ENCODE measurements at regions of chr19 and their contacts with region 1.

Region 1: DNA sequence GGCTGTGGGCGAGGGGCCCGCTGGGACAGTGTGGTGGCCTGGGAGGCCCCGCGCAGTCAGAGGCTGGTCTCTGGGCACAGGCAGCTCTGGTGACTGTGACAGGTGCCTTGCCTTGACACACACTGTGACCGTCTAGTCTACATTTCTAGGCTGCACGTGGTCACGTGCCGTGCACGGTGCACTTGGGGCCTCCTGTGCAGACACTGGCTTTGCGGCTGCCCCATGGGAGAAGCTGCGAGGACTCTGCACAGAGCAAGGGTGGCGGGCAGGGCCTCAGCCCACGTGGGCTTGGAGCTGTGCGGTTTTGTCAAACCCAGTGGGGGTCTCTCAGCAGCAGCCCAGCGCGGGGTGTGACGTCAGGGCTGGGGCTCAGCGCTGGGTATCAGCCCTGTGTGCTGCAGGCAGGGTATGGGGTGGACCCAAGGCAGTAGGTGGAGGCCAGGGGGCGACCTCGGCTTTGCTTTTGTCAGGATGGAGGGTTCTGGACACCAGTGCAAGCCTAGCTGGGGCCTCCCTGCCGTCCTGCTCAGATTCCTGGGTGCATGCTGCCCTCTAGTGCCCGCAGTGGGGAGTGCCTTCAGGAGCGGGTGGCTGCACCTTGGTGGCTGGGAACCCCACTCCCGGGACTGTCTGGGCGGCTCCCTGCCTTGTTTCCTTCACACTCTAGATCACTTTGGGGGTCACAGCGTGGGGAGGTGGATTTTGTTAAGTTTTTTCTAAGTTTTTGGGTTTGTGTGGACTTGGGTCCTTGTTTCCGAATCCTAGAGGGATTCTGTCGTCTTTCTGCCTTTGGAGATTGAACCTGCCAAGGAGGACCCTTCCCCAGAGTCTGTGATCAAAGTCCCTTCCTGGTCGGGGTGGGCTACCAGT is 62.6 kb downstream of the KDM4B start:
- DNase-seq: peak; percentile 48
- H3K4me3 ChIP-seq: no peak overlapping the region
- H3K27ac ChIP-seq: no peak overlapping the region
- H3K4me1 ChIP-seq: peaks cover 16% of the 10 kb centered on the region
- H3K27me3 ChIP-seq: no peaks in the 10 kb centered on the region
- CTCF ChIP-seq: peak; percentile 89 to 92

Region 2: DNA sequence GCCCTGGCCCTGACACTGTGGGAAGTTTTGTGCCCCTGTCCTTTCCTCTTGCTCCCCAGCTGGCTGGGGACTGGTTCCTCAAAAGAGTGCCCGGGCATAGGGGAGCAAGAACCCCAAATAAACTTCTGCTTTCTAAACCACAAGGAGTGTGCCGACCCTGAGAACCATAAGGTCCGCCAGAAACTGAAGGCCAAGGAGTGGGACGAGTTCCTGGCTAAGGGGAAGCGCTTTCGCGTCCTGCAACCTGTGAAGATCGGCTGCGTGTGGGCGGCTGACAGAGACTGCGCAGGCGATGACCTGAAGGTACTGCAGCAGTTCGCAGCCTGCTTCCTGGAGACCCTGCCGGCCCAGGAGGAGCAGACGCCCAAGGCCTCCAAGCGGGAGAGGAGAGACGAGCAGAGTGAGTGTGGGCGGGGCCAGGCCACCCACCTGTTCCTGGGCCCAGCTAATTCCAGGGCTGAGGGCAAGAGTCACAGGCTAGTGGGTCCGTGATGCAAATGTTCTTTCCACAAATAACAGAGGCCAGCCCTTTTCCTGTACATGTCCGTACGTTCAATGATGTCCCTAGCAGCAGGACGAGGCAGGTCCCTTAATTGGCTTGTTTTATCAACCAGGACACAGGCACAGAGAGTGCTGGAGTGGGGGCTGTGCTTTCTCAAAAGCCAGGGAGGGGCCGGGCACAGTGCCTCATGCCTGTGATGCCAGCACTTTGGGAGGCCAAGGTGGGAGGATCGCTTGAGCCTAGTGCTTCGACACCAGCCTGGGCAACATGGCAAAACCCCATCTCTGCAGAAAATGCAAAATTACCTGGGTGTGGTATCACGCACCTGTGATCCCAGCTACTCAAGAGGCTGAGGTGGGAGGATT is 599.4 kb before region 1 on chr19:
- CTCF ChIA-PET with region 1: no interaction called
- dilution Hi-C with region 1: no loop called
- in situ Hi-C with region 1: no loop called
- intact Hi-C with region 1: no loop called
- DNase-seq: no peak
- H3K4me3 ChIP-seq: no peak overlapping the region
- H3K27ac ChIP-seq: no peak overlapping the region
- H3K4me1 ChIP-seq: no peaks in the 10 kb centered on the region
- H3K27me3 ChIP-seq: no peaks in the 10 kb centered on the region
- CTCF ChIP-seq: no peak

Region 3: GRCh38 chr19:4738734-4739133 is 292.7 kb before region 1 on chr19:
- CTCF ChIA-PET with region 1: no interaction called
- dilution Hi-C with region 1: no loop called
- in situ Hi-C with region 1: no loop called
- intact Hi-C with region 1: loop called (anchors 5 kb)
- DNase-seq: no peak
- H3K4me3 ChIP-seq: no peak overlapping the region
- H3K27ac ChIP-seq: no peak overlapping the region
- H3K4me1 ChIP-seq: no peaks in the 10 kb centered on the region
- H3K27me3 ChIP-seq: peaks cover 2% of the 10 kb centered on the region
- CTCF ChIP-seq: no peak

Region 4: GRCh38 chr19:4815426-4816201 is 215.9 kb before region 1 on chr19:
- CTCF ChIA-PET with region 1: no interaction called
- dilution Hi-C with region 1: no loop called
- in situ Hi-C with region 1: loop called in 1 of 2 experiments (anchors 5 kb)
- intact Hi-C with region 1: no loop called
- DNase-seq: peak; percentile 75
- H3K4me3 ChIP-seq: no peak overlapping the region
- H3K27ac ChIP-seq: no peak overlapping the region
- H3K4me1 ChIP-seq: peaks cover 12% of the 10 kb centered on the region
- H3K27me3 ChIP-seq: no peaks in the 10 kb centered on the region
- CTCF ChIP-seq: no peak

Region 5: DNA sequence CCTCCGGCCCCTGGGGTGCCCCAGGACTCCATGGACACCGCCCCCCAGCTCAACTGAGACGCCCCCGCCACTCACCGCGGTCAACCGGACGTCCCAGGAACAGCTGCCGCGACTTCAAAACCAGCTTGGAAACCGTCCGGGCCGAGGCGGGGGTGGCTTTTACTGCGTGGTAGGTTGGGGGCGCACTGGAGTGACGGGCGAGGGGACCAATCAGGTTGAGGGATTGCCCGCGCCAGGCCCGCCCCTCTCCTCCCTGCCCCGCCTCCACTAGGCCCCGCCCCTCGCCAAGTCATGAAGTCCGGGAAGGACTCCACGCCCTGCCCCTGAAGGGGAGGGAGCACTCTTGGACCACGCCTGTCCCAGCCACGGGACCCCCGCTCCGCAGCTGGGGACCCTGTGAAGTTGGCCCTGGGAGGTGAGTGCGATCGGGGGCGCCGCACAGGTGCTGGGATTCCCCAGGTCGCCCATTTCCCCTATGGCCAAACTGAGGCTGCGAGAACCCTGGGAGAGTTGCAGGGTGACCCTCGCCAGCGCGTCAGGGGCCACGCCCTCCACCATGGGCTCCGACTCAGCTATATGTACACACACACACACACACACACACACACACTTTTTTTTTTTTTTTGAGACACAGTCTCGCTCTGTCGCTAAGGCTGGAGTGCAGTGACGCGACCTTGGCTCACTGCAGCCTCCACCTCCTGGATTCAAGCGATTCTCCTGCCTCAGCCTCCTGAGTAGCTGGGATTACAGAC is 163.8 kb before region 1 on chr19 and contains the start of gene PLIN3:
- CTCF ChIA-PET with region 1: no interaction called
- dilution Hi-C with region 1: no loop called
- in situ Hi-C with region 1: loop called in 1 of 2 experiments (anchors 10 kb)
- intact Hi-C with region 1: loop called (anchors 1 kb)
- DNase-seq: peak; percentile 92
- H3K4me3 ChIP-seq: peak within 1 kb of the TSS; percentile 74 to 100 (median 80)
- H3K27ac ChIP-seq: peak within 1 kb of the TSS; percentile 61
- H3K4me1 ChIP-seq: peaks cover 14% of the 10 kb centered on the region
- H3K27me3 ChIP-seq: no peaks in the 10 kb centered on the region
- CTCF ChIP-seq: no peak
- total RNA-seq, gene PLIN3: 89.4 to 147 TPM

Region 6: GRCh38 chr19:4968462-4969291 is 62.8 kb before region 1 on chr19 and contains the start of gene KDM4B:
- CTCF ChIA-PET with region 1: no interaction called
- dilution Hi-C with region 1: no loop called
- in situ Hi-C with region 1: no loop called
- intact Hi-C with region 1: loop called (anchors 2 kb)
- DNase-seq: peak; percentile 100
- H3K4me3 ChIP-seq: peak within 1 kb of the TSS; percentile 67 to 84 (median 68)
- H3K27ac ChIP-seq: peak within 1 kb of the TSS; percentile 58
- H3K4me1 ChIP-seq: peaks cover 28% of the 10 kb centered on the region
- H3K27me3 ChIP-seq: no peaks in the 10 kb centered on the region
- CTCF ChIP-seq: no peak
- total RNA-seq, gene KDM4B: 20.3 to 33.5 TPM

Region 7: GRCh38 chr19:5018224-5019015 is 13.0 kb before region 1 on chr19:
- CTCF ChIA-PET with region 1: no interaction called
- dilution Hi-C with region 1: no loop called
- in situ Hi-C with region 1: no loop called
- intact Hi-C with region 1: no loop called
- DNase-seq: no peak
- H3K4me3 ChIP-seq: no peak overlapping the region
- H3K27ac ChIP-seq: no peak overlapping the region
- H3K4me1 ChIP-seq: peaks cover 16% of the 10 kb centered on the region
- H3K27me3 ChIP-seq: no peaks in the 10 kb centered on the region
- CTCF ChIP-seq: no peak

Region 8: DNA sequence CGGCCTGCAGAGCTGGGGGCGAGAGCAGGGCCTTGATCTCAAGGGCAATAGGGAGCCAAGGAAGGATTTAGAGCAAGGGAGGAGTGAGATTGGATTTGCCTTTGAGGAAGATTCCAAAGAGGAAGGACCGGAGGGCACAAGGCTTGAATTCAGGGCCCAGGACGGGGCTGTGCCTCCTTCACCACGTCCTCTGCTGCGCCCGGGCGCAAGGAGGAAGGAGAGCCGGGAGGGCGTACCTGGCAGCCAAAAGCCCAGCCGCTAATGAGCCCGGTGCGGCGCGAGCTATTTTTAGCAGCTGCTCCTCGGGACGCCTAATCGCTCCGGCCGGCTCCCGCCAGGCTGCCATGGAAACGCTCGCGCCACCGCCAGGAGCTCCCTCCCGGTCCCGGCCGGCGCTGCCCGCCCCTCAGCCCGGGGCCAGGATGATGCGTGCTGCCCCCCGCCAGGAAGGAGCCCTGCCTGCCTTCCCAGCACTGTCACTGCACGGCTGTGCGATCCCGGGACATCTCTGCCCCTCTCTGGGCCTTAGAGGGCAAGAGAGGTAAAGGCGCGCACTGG is 504.9 kb after region 1 on chr19:
- CTCF ChIA-PET with region 1: no interaction called
- dilution Hi-C with region 1: no loop called
- in situ Hi-C with region 1: no loop called
- intact Hi-C with region 1: no loop called
- DNase-seq: peak; percentile 57
- H3K4me3 ChIP-seq: peak overlapping the region in 1 of 3 experiments; percentile 28
- H3K27ac ChIP-seq: peak overlapping the region; percentile 76
- H3K4me1 ChIP-seq: peaks cover 17% of the 10 kb centered on the region
- H3K27me3 ChIP-seq: no peaks in the 10 kb centered on the region
- CTCF ChIP-seq: no peak

Region 9: DNA sequence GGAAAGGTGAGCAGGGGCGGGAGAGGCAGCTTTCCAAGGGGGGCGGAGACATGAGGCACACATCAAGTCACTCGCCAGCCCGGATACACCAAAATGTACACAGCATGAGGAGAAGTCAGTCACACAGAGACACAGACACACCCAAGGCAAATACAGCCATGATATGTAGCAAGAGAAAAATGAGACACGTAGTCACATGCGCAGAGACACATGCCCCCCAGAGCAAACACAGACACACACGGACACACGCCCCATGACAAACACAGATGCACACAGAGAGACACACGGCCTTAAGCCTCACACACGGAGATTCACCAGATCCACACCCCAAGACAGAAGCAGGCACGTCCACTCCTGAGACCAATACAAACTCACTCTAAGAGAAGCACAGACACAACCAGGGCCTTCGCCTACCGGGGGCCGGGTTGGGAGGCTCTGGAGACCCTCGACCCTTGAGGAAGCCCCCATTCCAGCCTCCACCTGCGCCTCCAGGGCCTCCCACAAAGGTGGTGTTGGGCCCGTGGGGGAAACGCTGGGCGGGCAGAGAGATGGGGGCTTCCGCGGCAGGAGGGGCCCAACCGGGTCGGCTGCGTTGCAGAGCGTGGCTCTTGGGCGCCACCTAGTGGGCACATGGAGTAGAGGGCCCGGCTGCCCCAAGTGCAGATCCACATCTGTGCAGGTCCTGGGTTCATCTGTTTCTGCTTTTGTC is 546.5 kb after region 1 on chr19:
- CTCF ChIA-PET with region 1: no interaction called
- dilution Hi-C with region 1: no loop called
- in situ Hi-C with region 1: loop called in 1 of 2 experiments (anchors 25 kb)
- intact Hi-C with region 1: no loop called
- DNase-seq: peak; percentile 67
- H3K4me3 ChIP-seq: peak overlapping the region in 1 of 3 experiments; percentile 42
- H3K27ac ChIP-seq: no peak overlapping the region
- H3K4me1 ChIP-seq: peaks cover 8% of the 10 kb centered on the region
- H3K27me3 ChIP-seq: no peaks in the 10 kb centered on the region
- CTCF ChIP-seq: peak; percentile 85 to 99